ENCODE measurements at regions of chr11 and their contacts with region 1.

Region 1: DNA sequence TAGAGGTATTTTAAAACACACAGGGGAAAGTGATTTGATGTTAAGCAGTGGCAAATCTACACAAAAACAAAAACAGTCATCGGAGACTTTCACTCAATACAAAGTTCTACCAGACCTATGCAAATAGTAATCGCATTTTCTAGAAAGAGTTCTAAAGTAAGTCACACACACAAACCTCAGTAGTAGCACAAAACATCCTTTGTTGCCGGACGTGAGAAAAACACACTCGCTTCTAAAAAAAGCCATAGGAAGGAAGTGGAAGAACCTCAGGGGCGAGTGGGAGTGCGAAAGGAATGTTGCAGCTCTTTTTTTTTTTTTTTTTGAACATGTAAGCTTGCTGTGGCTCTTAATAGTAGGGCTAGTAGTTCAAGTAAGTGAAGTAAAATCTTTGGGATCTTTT is 88.9 kb downstream of the MAML2 start:
- DNase-seq: peak in 5 of 10 donors; percentile 16 to 54 (median 35)
- ATAC-seq: peak in 1 of 2 donors; percentile 17
- H3K4me3 Mint-ChIP-seq: peak overlapping the region; percentile 34 to 85 (median 80)
- H3K27ac Mint-ChIP-seq: peak overlapping the region; percentile 83 to 100 (median 98)
- H3K4me1 Mint-ChIP-seq: peaks cover 51 to 95% (median 92%) of the 10 kb centered on the region in 4 donors
- H3K27me3 Mint-ChIP-seq: no peaks in the 10 kb centered on the region

Region 2: GRCh38 chr11:96242971-96243647 is 11.0 kb before region 1 on chr11:
- POLR2A ChIA-PET with region 1: interaction called, 27 read pairs
- DNase-seq: peak; percentile 54 to 81 (median 66)
- ATAC-seq: peak; percentile 73 to 85
- H3K4me3 Mint-ChIP-seq: peak overlapping the region; percentile 81 to 91 (median 84)
- H3K27ac Mint-ChIP-seq: peak overlapping the region; percentile 80 to 100 (median 93)
- H3K4me1 Mint-ChIP-seq: peaks cover 34 to 65% (median 62%) of the 10 kb centered on the region in 4 donors
- H3K27me3 Mint-ChIP-seq: no peaks in the 10 kb centered on the region

Region 3: GRCh38 chr11:96267496-96268032 is 13.5 kb after region 1 on chr11:
- POLR2A ChIA-PET with region 1: interaction called, 21 read pairs
- DNase-seq: peak in 5 of 10 donors; percentile 12 to 29 (median 23)
- ATAC-seq: peak; percentile 78 to 93
- H3K4me3 Mint-ChIP-seq: peak overlapping the region; percentile 59 to 86 (median 73)
- H3K27ac Mint-ChIP-seq: peak overlapping the region; percentile 63 to 94 (median 93)
- H3K4me1 Mint-ChIP-seq: peaks cover 42 to 94% (median 85%) of the 10 kb centered on the region in 4 donors
- H3K27me3 Mint-ChIP-seq: no peaks in the 10 kb centered on the region

Measured in naive thymus-derived CD8-positive, alpha-beta T cell (primary cell).